PC-9 (cell line): ENCODE measurements at regions of chr6 and their contacts with region 1.

Region 1: DNA sequence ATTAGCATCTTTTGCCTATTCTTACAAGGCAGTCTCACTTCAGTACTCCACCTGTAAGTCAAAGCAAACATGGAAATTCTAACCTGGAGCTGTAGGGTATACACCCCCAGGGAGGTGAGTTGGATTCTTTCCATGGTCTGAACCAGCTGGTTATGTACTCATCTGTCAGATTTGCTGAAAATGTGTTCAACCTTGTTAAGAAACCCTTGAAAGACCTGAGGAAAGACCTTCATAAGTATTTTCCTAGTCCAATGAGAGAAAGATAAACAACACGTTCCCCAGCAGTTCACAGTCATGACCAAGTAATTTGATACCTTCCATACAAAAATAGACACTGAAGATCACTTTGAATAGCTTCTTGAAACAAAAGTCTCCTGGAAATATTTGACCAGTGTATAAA is 42.5 kb downstream of the ID4 start:
- DNase-seq: peak; percentile 14 to 51
- H3K4me3 ChIP-seq: no peak overlapping the region
- H3K27ac ChIP-seq: no peak overlapping the region
- H3K4me1 ChIP-seq: no peaks in the 10 kb centered on the region
- H3K27me3 ChIP-seq: no peaks in the 10 kb centered on the region
- CTCF ChIP-seq: no peak

Region 2: DNA sequence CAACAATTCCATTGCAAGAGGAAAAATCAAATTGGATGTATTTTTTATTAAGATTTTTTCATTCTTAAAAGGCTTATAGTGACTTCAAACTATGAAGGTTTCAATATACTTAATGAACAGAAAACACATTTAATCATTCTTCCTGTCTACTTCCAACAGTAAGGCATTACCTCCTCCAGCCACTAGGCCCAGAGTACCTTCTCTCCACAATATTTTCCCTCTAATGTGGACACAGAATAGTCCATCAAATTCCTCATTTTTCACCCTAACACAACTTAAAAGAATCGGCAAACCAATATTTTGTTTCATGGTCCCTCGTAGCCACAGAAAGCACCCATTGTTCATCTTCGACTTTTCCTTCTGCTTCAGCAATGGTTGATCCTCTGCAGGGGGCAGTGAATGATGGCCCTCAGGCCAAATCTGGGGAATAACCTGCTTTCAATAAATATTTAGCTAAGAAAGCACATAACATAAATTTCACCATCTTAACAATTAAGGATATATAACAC is 377.9 kb before region 1 on chr6:
- CTCF ChIA-PET with region 1: no interaction called
- POLR2A ChIA-PET with region 1: interaction called, 47 read pairs
- intact Hi-C with region 1: no loop called
- DNase-seq: no peak
- H3K4me3 ChIP-seq: no peak overlapping the region
- H3K27ac ChIP-seq: no peak overlapping the region
- H3K4me1 ChIP-seq: no peaks in the 10 kb centered on the region
- H3K27me3 ChIP-seq: no peaks in the 10 kb centered on the region
- CTCF ChIP-seq: peak; percentile 31; the same call in 1 of the 2 replicates

Region 3: GRCh38 chr6:19524366-19525186 is 355.1 kb before region 1 on chr6:
- CTCF ChIA-PET with region 1: no interaction called
- POLR2A ChIA-PET with region 1: no interaction called
- intact Hi-C with region 1: no loop called
- DNase-seq: no peak
- H3K4me3 ChIP-seq: no peak overlapping the region
- H3K27ac ChIP-seq: no peak overlapping the region
- H3K4me1 ChIP-seq: no peaks in the 10 kb centered on the region
- H3K27me3 ChIP-seq: no peaks in the 10 kb centered on the region
- CTCF ChIP-seq: no peak

Region 4: DNA sequence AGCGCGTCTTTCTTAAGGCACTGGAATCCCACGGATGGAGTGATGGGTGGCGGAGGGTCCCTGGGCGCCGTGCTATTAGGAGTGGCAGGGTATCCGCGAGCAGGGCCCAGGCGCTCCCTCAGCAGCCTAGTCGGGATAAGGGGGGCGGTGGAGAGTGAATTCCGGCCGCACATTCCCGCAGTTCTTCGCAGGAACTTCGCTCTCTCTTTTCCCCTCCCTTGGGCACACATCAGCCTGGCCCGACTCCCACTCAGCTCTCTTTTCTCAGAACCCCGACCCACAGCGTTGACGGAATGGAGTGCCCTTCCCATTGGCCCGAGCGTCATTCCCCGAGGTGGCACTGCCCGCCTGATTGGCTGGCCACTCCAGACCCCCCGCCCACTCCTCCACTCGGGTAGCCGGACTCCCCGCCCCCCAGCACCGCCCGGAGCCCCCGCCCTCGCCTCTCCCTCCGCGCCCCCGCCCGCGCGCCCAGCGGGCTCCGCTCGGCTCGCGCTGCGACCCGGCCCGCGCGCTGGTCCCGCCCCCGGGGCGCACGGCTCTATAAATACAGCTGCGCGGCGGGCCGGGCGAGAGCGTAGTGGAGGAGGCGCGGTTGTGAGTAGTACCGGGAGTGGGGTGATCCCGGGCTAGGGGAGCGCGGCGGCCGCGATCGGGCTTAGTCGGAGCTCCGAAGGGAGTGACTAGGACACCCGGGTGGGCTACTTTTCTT is 42.7 kb before region 1 on chr6 and contains the start of gene ID4:
- CTCF ChIA-PET with region 1: no interaction called
- POLR2A ChIA-PET with region 1: no interaction called
- intact Hi-C with region 1: no loop called
- DNase-seq: peak in 1 of 2 experiments; percentile 83
- H3K4me3 ChIP-seq: peak within 1 kb of the TSS; percentile 66
- H3K27ac ChIP-seq: no peak within 1 kb of the TSS
- H3K4me1 ChIP-seq: peaks cover 13% of the 10 kb centered on the region
- H3K27me3 ChIP-seq: peaks cover 17% of the 10 kb centered on the region
- CTCF ChIP-seq: no peak
- total RNA-seq, gene ID4: 4.4 and 5.9 TPM in 2 replicates